Activated CD4-positive, alpha-beta T cell treated with anti-CD3 and anti-CD28 coated beads, Interleukin-2, amount 10 ng/mL, durations not matched to agents 7 days and 5 days (primary cell): ENCODE measurements at regions of chr20 and their contacts with region 1.

Region 1: GRCh38 chr20:53915446-53916172 is 154.8 kb downstream of the BCAS1 start:
- DNase-seq: peak; percentile 98
- H3K4me3 Mint-ChIP-seq: peak overlapping the region; percentile 88
- H3K27ac Mint-ChIP-seq: peak overlapping the region; percentile 90
- H3K4me1 Mint-ChIP-seq: peaks cover 40% of the 10 kb centered on the region
- H3K27me3 Mint-ChIP-seq: no peaks in the 10 kb centered on the region

Region 2: GRCh38 chr20:53738039-53738944 is 177.3 kb before region 1 on chr20:
- CTCF ChIA-PET with region 1: interaction called, 12 read pairs
- POLR2A ChIA-PET with region 1: no interaction called
- DNase-seq: no peak
- H3K4me3 Mint-ChIP-seq: no peak overlapping the region
- H3K27ac Mint-ChIP-seq: no peak overlapping the region
- H3K4me1 Mint-ChIP-seq: peaks cover 64% of the 10 kb centered on the region
- H3K27me3 Mint-ChIP-seq: no peaks in the 10 kb centered on the region

Region 3: GRCh38 chr20:53872561-53873229 is 42.9 kb before region 1 on chr20:
- CTCF ChIA-PET with region 1: interaction called, 10 read pairs
- POLR2A ChIA-PET with region 1: interaction called, 6 read pairs
- DNase-seq: peak; percentile 77
- H3K4me3 Mint-ChIP-seq: peak overlapping the region; percentile 77
- H3K27ac Mint-ChIP-seq: peak overlapping the region; percentile 97
- H3K4me1 Mint-ChIP-seq: peaks cover 56% of the 10 kb centered on the region
- H3K27me3 Mint-ChIP-seq: no peaks in the 10 kb centered on the region

Region 4: GRCh38 chr20:53905019-53905847 is 10.4 kb before region 1 on chr20:
- CTCF ChIA-PET with region 1: interaction called, 36 read pairs
- POLR2A ChIA-PET with region 1: interaction called, 7 read pairs
- DNase-seq: no peak
- H3K4me3 Mint-ChIP-seq: no peak overlapping the region
- H3K27ac Mint-ChIP-seq: no peak overlapping the region
- H3K4me1 Mint-ChIP-seq: peaks cover 59% of the 10 kb centered on the region
- H3K27me3 Mint-ChIP-seq: no peaks in the 10 kb centered on the region

Region 5: GRCh38 chr20:53939572-53940359 is 24.2 kb after region 1 on chr20:
- CTCF ChIA-PET with region 1: interaction called, 12 read pairs
- POLR2A ChIA-PET with region 1: interaction called, 4 read pairs
- DNase-seq: peak; percentile 80
- H3K4me3 Mint-ChIP-seq: no peak overlapping the region
- H3K27ac Mint-ChIP-seq: peak overlapping the region; percentile 58
- H3K4me1 Mint-ChIP-seq: peaks cover 57% of the 10 kb centered on the region
- H3K27me3 Mint-ChIP-seq: no peaks in the 10 kb centered on the region

Region 6: GRCh38 chr20:53967527-53967926 is 51.9 kb after region 1 on chr20:
- CTCF ChIA-PET with region 1: no interaction called
- POLR2A ChIA-PET with region 1: no interaction called
- DNase-seq: no peak
- H3K4me3 Mint-ChIP-seq: no peak overlapping the region
- H3K27ac Mint-ChIP-seq: no peak overlapping the region
- H3K4me1 Mint-ChIP-seq: no peaks in the 10 kb centered on the region
- H3K27me3 Mint-ChIP-seq: peaks cover 5% of the 10 kb centered on the region